HEK293 (cell line): ENCODE measurements at regions of chr3 and their contacts with region 1.

Region 1: DNA sequence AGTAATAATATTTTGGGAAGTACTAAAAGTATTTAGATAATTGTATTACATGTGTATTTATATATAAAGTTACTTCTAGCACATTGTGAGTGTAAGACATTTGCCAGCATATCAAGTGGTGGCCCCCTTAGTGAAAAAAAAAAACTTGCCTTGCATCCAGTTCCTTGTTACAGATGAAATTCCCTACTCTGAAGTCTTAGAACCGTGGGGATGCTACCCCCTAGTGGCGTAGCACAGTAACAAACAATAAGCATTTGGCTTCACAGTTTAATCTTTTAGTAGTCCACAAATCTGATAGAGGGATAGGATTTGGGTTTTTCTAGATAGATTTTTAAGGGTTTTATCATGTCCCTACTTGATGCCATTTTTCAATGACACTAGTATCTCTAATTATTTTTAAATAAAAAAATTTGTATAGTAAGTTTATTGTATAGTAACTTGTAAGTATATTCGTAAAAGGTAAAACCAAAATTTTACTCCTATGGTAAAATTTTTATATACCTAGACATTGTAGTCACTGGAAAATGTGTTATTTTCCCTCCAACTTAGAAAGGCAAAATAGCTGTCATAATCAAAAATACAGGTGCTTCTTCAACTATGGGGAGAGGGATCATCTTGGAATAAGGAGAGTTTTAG is 14.3 kb downstream of the SMC4 start:
- H3K4me3 ChIP-seq: no peak overlapping the region
- H3K27ac ChIP-seq: no peak overlapping the region
- H3K4me1 ChIP-seq: no peaks in the 10 kb centered on the region
- CTCF ChIP-seq: no peak

Region 2: GRCh38 chr3:160114355-160114995 is 299.3 kb before region 1 on chr3:
- CTCF ChIA-PET with region 1: no interaction called
- POLR2A ChIA-PET with region 1: no interaction called
- H3K4me3 ChIP-seq: no peak overlapping the region
- H3K27ac ChIP-seq: no peak overlapping the region
- H3K4me1 ChIP-seq: no peaks in the 10 kb centered on the region
- CTCF ChIP-seq: no peak

Region 3: DNA sequence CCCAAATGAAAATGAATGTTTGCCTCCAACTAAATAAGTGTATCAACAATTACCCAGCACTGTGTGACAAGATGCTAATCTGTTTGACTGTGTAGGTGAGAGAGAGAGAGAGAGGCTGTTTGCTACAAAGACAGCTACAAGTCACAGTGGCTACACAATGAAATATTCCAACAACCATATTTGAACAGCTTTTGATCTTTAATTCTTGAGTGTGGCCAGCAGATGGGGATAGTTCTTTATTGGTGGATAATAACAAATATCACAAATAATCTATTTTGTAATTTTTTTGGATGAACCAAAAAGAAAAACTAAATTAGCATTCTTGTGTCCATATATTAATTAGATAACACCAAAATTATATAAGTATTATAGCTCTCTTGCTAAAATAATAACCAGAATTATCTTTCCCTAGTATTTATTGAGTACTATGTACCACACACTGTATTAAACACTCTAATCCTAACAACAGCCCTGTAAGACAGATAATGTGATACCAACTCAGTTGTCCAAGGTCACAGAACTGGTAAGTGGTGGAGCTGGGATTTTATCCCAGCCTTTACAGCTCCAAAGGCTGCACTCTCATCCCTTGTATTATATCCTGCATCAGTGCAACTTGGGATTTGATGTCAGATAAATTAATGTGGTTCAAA is 250.4 kb before region 1 on chr3:
- CTCF ChIA-PET with region 1: interaction called, 22 read pairs
- POLR2A ChIA-PET with region 1: no interaction called
- H3K4me3 ChIP-seq: no peak overlapping the region
- H3K27ac ChIP-seq: no peak overlapping the region
- H3K4me1 ChIP-seq: no peaks in the 10 kb centered on the region
- CTCF ChIP-seq: no peak

Region 4: GRCh38 chr3:160247766-160248165 is 166.0 kb before region 1 on chr3:
- CTCF ChIA-PET with region 1: no interaction called
- POLR2A ChIA-PET with region 1: no interaction called
- H3K4me3 ChIP-seq: no peak overlapping the region
- H3K27ac ChIP-seq: no peak overlapping the region
- H3K4me1 ChIP-seq: no peaks in the 10 kb centered on the region
- CTCF ChIP-seq: no peak

Region 5: GRCh38 chr3:160331127-160331937 is 82.4 kb before region 1 on chr3:
- CTCF ChIA-PET with region 1: no interaction called
- POLR2A ChIA-PET with region 1: no interaction called
- H3K4me3 ChIP-seq: no peak overlapping the region
- H3K27ac ChIP-seq: no peak overlapping the region
- H3K4me1 ChIP-seq: no peaks in the 10 kb centered on the region
- CTCF ChIP-seq: no peak

Region 6: DNA sequence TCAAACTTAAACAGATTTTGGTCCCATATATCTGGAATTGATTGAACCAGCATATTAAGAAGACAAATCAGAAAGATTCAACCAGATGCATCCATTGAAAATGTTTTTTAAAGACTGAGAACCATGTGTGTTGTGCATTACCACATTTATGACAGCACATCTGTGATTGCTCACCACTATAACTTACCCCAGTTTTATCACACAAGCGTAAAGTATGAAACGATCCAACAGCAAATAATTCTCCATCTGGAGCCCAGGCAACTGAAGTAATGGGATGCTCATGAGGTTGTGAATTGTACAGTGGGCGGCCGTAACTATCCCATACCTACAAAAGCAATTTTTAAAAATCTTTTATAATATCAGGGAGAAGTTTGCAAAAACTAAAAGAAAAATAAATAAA is 57.9 kb before region 1 on chr3:
- CTCF ChIA-PET with region 1: no interaction called
- POLR2A ChIA-PET with region 1: no interaction called
- H3K4me3 ChIP-seq: no peak overlapping the region
- H3K27ac ChIP-seq: no peak overlapping the region
- H3K4me1 ChIP-seq: no peaks in the 10 kb centered on the region
- CTCF ChIP-seq: no peak

Region 7: GRCh38 chr3:160401291-160402095 is 12.2 kb before region 1 on chr3:
- CTCF ChIA-PET with region 1: interaction called, 12 read pairs
- POLR2A ChIA-PET with region 1: interaction called, 9 read pairs
- H3K4me3 ChIP-seq: peak overlapping the region; percentile 72
- H3K27ac ChIP-seq: peak overlapping the region; percentile 91
- H3K4me1 ChIP-seq: no peaks in the 10 kb centered on the region
- CTCF ChIP-seq: no peak